ENCODE measurements at regions of chr3 and their contacts with region 1.

Region 1: DNA sequence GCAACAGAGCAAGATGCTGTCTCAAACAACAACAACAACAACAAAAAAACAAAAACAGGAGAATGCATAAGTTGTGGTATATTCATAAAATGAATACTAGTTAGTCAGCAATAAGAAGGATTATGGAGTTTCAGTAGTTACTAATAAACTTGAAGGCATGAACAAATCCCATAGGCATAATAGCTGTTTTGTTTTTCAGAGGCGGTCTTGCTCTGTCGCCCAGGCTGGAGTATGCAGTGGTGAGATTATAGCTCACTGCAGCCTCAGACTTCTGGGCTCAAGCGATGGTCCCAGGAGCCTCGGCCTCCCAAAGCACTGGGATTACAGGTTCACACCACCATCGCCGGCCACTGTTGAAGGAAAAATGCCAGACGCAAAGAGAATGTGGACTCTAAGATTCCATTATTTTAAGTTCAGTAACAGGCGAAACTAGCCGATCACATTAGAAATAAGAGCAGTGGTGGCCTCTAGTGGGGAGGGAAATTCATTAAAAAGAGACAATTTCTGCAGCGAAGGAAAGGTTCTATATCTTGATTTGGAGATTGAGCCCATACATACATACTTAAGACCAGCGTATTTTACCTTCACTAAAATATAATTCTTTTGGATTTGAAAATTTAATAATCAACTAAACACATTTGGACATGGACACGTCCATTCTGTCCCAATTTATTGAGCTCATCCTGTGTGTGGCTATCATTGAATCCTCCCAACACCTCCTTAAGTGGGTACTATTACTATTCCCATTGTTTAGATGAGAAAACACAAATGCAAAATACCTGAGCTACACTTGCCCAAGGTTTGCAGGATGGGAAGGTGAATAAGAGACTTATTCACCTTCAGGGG is 27.4 kb upstream of the HDAC11 start:
- DNase-seq: peak in 8 of 9 donors; percentile 30 to 70 (median 61)
- ATAC-seq: peak; percentile 55
- H3K4me3 ChIP-seq: peak overlapping the region; percentile 94
- H3K4me3 Mint-ChIP-seq: peak overlapping the region; percentile 79 to 99 (median 97)
- H3K27ac ChIP-seq: peak overlapping the region; percentile 74
- H3K27ac Mint-ChIP-seq: peak overlapping the region in 7 of 9 donors; percentile 49 to 99 (median 97)
- H3K4me1 ChIP-seq: peaks cover 13 to 15% of the 10 kb centered on the region in 2 donors
- H3K4me1 Mint-ChIP-seq: peaks cover 0 to 33% (median 16%) of the 10 kb centered on the region in 7 donors
- H3K27me3 ChIP-seq: no peaks in the 10 kb centered on the region
- H3K27me3 Mint-ChIP-seq: no peaks in the 10 kb centered on the region

Region 2: DNA sequence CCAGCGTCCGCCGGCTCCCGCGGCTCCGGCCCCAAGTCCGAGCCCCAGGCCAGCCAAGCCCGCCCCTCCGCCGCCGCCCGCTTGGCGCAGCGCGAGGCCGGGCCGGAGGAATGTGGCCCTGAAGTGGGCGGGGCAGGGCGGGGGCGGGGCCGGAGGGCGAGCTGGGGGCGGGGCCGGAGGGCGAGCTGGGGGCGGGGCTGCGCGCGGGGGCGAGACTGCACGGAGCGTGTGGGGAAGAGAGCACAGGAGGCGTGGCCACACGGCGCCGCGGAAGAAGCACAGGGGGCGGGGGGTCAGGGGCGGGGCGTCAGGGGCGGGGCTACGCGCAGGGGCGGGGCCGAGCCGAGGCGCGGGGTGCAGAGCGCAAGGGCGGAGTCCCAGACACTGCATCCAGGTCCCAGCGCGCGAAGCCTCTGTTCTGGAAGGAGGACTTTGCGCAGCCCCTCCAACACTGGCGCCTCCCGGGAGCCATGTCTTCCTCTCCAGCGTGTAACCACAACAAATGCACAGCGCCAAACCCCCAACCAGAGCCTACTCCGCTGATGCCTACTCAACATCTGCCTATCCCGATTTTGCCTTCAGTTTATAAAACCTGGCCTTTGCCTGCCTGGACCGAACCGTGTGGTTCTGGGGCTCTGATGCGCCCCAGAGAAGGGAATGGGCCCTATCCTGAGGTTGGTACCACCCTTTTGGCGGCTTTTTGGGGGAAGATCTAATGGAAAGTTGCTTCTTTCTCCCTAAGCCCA is 484.9 kb before region 1 on chr3:
- CTCF ChIA-PET with region 1: no interaction called
- POLR2A ChIA-PET with region 1: no interaction called
- intact Hi-C with region 1: loop called in 1 of 2 experiments (anchors 2 kb)
- DNase-seq: peak; percentile 71 to 87 (median 83)
- ATAC-seq: peak; percentile 99
- H3K4me3 ChIP-seq: peak overlapping the region; percentile 47
- H3K4me3 Mint-ChIP-seq: peak overlapping the region; percentile 74 to 87 (median 86)
- H3K27ac ChIP-seq: peak overlapping the region; percentile 29
- H3K27ac Mint-ChIP-seq: peak overlapping the region in 4 of 9 donors; percentile 9 to 84 (median 60)
- H3K4me1 ChIP-seq: peaks cover 47 to 53% of the 10 kb centered on the region in 2 donors
- H3K4me1 Mint-ChIP-seq: peaks cover 50 to 86% (median 77%) of the 10 kb centered on the region in 7 donors
- H3K27me3 ChIP-seq: no peaks in the 10 kb centered on the region
- H3K27me3 Mint-ChIP-seq: peaks cover 0 to 5% (median 0%) of the 10 kb centered on the region in 5 donors

Region 3: GRCh38 chr3:13229273-13229949 is 223.3 kb before region 1 on chr3:
- CTCF ChIA-PET with region 1: no interaction called
- POLR2A ChIA-PET with region 1: no interaction called
- intact Hi-C with region 1: loop called (anchors 1 to 5 kb)
- DNase-seq: peak in 1 of 9 donors; percentile 7
- ATAC-seq: peak; percentile 37
- H3K4me3 ChIP-seq: no peak overlapping the region
- H3K4me3 Mint-ChIP-seq: no peak overlapping the region
- H3K27ac ChIP-seq: no peak overlapping the region
- H3K27ac Mint-ChIP-seq: no peak overlapping the region
- H3K4me1 ChIP-seq: peaks cover 0 to 13% of the 10 kb centered on the region in 2 donors
- H3K4me1 Mint-ChIP-seq: peaks cover 9 to 21% (median 14%) of the 10 kb centered on the region in 7 donors
- H3K27me3 ChIP-seq: no peaks in the 10 kb centered on the region
- H3K27me3 Mint-ChIP-seq: peaks cover 7 to 23% (median 8%) of the 10 kb centered on the region in 5 donors

Region 4: DNA sequence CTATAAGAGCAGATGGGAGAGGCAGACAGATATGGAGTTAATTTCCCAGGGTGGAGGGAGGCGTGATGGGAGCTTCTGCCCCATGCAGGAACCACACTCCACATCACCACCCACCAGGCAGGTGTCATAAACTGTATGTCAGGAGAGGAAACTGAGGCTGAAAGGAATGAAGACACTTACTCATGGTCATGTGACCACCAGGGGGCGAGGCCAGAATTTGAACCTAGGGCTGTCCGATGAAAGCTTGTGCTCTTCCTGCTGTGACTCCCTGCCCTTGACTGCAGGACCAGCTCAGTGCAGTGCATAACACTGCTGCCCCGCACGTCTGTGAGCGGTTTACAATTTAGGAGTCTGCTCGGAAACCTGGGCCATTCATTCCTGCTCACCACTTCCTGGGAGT is 61.4 kb before region 1 on chr3:
- CTCF ChIA-PET with region 1: interaction called, 38 read pairs
- POLR2A ChIA-PET with region 1: interaction called, 12 read pairs
- intact Hi-C with region 1: loop called (anchors 1 kb)
- DNase-seq: peak in 3 of 9 donors; percentile 14 to 19 (median 15)
- ATAC-seq: peak; percentile 31
- H3K4me3 ChIP-seq: no peak overlapping the region
- H3K4me3 Mint-ChIP-seq: no peak overlapping the region
- H3K27ac ChIP-seq: no peak overlapping the region
- H3K27ac Mint-ChIP-seq: peak overlapping the region in 6 of 9 donors; percentile 25 to 81 (median 68)
- H3K4me1 ChIP-seq: peaks cover 0 to 6% of the 10 kb centered on the region in 2 donors
- H3K4me1 Mint-ChIP-seq: peaks cover 12 to 50% (median 35%) of the 10 kb centered on the region in 7 donors
- H3K27me3 ChIP-seq: no peaks in the 10 kb centered on the region
- H3K27me3 Mint-ChIP-seq: no peaks in the 10 kb centered on the region

Region 5: DNA sequence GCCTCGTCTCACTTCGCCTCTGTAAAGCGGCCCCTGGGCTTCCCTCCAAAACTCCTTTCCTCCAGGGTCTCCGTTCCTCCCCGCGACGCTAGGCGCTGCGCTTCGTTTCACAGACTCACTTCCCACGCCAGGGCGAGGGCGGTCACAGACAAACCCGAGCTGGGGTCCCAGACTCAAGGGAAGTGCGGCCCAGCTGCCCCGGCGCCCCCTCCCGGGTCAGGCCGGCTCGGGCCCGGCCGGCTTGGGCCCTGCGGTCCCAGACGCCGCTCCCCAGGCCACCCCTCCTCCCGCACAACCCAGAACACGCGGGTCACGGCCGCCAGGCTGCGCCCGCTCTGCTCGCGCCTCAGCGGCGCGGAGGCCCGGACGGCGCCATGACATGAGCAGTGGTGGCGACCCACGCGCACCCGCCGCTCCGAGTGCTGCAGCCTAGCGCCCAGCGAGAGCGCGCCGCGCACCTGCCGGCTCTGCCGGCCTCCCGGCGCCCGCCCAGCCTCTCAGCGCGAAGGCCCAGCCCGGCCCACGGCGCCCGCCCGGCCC is 33.1 kb before region 1 on chr3:
- CTCF ChIA-PET with region 1: interaction called, 102 read pairs
- POLR2A ChIA-PET with region 1: interaction called, 90 read pairs
- intact Hi-C with region 1: loop called (anchors 1 kb)
- DNase-seq: peak; percentile 58 to 69 (median 64)
- ATAC-seq: peak; percentile 74
- H3K4me3 ChIP-seq: peak overlapping the region; percentile 70
- H3K4me3 Mint-ChIP-seq: peak overlapping the region; percentile 77 to 100 (median 90)
- H3K27ac ChIP-seq: peak overlapping the region; percentile 96
- H3K27ac Mint-ChIP-seq: peak overlapping the region; percentile 83 to 97 (median 92)
- H3K4me1 ChIP-seq: peaks cover 55 to 60% of the 10 kb centered on the region in 2 donors
- H3K4me1 Mint-ChIP-seq: peaks cover 41 to 81% (median 69%) of the 10 kb centered on the region in 7 donors
- H3K27me3 ChIP-seq: no peaks in the 10 kb centered on the region
- H3K27me3 Mint-ChIP-seq: no peaks in the 10 kb centered on the region

Region 6: GRCh38 chr3:14178247-14179113 is 725.8 kb after region 1 on chr3 and contains the starts of genes LSM3 and XPC:
- CTCF ChIA-PET with region 1: no interaction called
- POLR2A ChIA-PET with region 1: no interaction called
- intact Hi-C with region 1: loop called in 1 of 2 experiments (anchors 1 kb)
- DNase-seq: peak; percentile 98 to 100 (median 99)
- ATAC-seq: peak; percentile 98
- H3K4me3 ChIP-seq: peak within 1 kb of the TSS; percentile 68
- H3K4me3 Mint-ChIP-seq: peak within 1 kb of the TSS; percentile 94 to 100 (median 98)
- H3K27ac ChIP-seq: peak within 1 kb of the TSS; percentile 99
- H3K27ac Mint-ChIP-seq: peak within 1 kb of the TSS; percentile 96 to 100 (median 99)
- H3K4me1 ChIP-seq: peaks cover 37 to 48% of the 10 kb centered on the region in 2 donors
- H3K4me1 Mint-ChIP-seq: peaks cover 45 to 85% (median 82%) of the 10 kb centered on the region in 7 donors
- H3K27me3 ChIP-seq: no peaks in the 10 kb centered on the region
- H3K27me3 Mint-ChIP-seq: peaks cover 0 to 2% (median 0%) of the 10 kb centered on the region in 5 donors
- total RNA-seq, gene LSM3: 6.0 to 14.1 (median 8.0) TPM
- total RNA-seq, gene XPC: 56.3 to 94.8 (median 78.1) TPM

Measured in naive thymus-derived CD4-positive, alpha-beta T cell (primary cell).